ENCODE measurements at regions of chr3 and their contacts with region 1.

Region 1: DNA sequence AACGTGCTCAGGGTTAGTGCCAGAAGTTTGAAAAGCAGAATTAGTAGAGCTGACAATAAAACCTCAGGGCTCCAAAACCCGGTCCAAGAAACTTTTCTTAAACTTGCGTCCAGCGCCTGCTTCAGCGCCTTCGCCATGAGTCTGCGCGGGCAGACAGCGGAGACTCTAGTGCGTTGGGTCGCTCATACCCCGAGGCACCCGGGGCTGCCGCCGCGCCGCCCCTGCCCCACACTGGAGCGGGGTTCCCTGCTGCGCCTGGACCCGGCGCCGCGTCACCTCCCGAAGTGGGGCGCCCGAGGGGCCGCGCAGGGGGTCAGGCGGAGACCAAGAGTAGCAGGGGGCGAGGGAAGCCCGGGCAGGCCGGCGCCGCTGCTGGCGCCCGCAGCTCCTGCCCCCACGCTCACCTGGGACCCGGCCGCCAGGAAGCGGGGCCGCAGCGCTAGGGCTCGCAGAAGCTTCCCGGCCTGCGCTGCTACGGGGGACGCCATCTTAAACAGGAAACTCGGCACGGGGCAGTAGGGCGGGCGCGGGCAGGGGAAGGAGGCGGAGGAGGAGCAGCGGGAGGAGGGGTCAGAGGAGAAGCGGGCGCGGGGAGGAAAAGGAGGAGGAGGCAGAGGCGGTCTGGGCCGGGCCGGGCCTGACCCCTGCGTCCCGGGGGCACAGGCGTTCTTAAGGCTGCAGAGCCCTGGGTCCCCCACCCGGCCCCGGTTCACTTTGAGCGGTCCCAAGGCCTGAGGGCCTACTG is at the start of gene SUCLG2:
- DNase-seq: peak; percentile 92
- H3K4me3 Mint-ChIP-seq: peak within 1 kb of the TSS; percentile 76
- H3K27ac Mint-ChIP-seq: peak within 1 kb of the TSS; percentile 87
- H3K4me1 Mint-ChIP-seq: peaks cover 56% of the 10 kb centered on the region
- H3K27me3 Mint-ChIP-seq: no peaks in the 10 kb centered on the region
- total RNA-seq, gene SUCLG2: 81.3 to 85.3 TPM

Region 2: GRCh38 chr3:66998113-66998903 is 656.0 kb before region 1 on chr3 and contains the start of gene KBTBD8:
- CTCF ChIA-PET with region 1: no interaction called
- intact Hi-C with region 1: loop called (anchors 1 kb)
- DNase-seq: peak; percentile 98
- H3K4me3 Mint-ChIP-seq: peak within 1 kb of the TSS; percentile 87
- H3K27ac Mint-ChIP-seq: peak within 1 kb of the TSS; percentile 95
- H3K4me1 Mint-ChIP-seq: peaks cover 27% of the 10 kb centered on the region
- H3K27me3 Mint-ChIP-seq: peaks cover 4% of the 10 kb centered on the region
- total RNA-seq, gene KBTBD8: 6.8 to 7.4 TPM

Region 3: DNA sequence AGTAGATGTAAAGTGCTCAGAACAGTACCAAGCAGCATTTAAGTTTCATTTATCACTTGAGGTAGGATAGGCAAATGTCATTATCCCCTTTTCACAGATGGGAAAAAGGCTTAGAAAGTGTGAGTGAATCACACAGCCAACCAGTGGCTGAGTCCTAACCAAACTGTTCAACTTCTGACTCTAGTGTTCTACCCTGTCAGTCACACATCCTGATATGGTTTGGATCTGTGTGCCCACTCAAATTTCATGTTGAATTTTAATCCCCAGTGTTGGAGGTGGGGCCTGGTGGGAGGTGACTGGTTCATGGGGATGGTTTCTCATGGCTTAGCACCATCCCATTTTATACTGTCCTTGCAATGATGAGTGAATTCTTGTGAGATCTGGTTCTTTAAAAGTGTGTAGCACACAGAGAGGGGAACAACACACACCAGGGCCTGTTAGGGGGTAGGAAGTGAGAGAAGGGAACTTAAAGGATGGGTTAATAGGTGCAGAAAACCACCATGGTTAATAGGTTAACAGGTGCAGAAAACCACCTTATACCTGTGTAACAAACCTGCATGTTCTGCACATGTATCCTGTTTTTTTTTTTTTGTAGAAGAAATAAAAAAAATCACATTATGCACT is 304.6 kb before region 1 on chr3:
- CTCF ChIA-PET with region 1: no interaction called
- intact Hi-C with region 1: loop called (anchors 5 kb)
- DNase-seq: peak; percentile 70
- H3K4me3 Mint-ChIP-seq: no peak overlapping the region
- H3K27ac Mint-ChIP-seq: no peak overlapping the region
- H3K4me1 Mint-ChIP-seq: peaks cover 17% of the 10 kb centered on the region
- H3K27me3 Mint-ChIP-seq: peaks cover 7% of the 10 kb centered on the region

Region 4: GRCh38 chr3:67635257-67635656 is 19.0 kb before region 1 on chr3:
- CTCF ChIA-PET with region 1: no interaction called
- intact Hi-C with region 1: loop called (anchors 1 kb)
- DNase-seq: peak; percentile 29
- H3K4me3 Mint-ChIP-seq: no peak overlapping the region
- H3K27ac Mint-ChIP-seq: peak overlapping the region; percentile 59
- H3K4me1 Mint-ChIP-seq: peaks cover 67% of the 10 kb centered on the region
- H3K27me3 Mint-ChIP-seq: no peaks in the 10 kb centered on the region

Region 5: DNA sequence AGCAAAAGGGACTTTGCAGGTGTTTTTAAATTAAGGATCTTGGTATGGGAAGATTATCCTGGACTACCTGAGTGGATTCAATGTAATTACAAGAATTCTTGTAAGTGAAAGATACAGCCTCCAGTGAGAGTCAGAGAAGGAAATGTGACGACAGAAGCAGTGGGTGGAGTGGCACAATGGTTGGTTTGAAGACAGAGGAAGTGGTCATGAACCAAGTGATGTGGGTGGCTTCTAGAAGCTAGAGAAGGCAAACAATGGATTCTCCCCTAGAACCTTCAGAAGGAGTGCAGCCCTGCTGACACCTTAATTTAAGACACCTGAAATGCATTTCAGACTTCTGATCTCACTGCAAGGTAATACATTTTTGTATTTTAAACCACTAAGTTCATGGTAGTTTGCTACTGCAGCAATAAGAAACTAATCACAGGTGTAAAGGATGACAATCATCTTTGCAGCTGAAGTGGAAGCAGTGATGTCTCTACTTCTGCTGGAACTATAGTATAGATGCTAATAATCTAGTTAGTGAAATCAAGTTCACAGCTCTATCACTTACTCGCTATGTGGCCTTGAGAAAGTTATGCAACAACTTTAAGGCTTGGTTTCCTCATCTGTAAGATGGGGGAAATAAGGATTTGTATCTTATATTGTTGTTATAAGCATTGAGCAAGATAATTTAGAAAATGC is 403.5 kb after region 1 on chr3:
- CTCF ChIA-PET with region 1: no interaction called
- intact Hi-C with region 1: loop called (anchors 10 kb)
- DNase-seq: peak; percentile 85
- H3K4me3 Mint-ChIP-seq: peak overlapping the region; percentile 53
- H3K27ac Mint-ChIP-seq: peak overlapping the region; percentile 76
- H3K4me1 Mint-ChIP-seq: peaks cover 67% of the 10 kb centered on the region
- H3K27me3 Mint-ChIP-seq: no peaks in the 10 kb centered on the region

Region 6: DNA sequence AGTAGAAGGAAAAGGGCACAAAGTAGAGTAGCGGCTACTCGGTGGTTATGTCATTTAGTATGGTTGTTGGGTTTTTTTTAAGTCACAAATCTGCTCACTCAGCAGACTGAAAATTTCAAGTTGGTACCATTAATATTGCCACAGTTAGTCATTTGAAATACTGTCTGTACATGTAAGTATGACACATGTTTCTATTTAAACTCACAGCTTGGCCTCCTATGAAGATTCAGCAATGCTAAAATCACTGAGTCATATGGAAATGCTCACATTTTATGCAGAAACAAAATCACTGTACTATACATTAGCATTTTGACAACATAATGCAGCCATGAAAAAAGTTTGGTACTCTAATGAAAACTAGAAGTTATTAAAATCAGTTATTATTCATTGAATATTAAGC is 706.2 kb after region 1 on chr3:
- CTCF ChIA-PET with region 1: no interaction called
- intact Hi-C with region 1: no loop called
- DNase-seq: no peak
- H3K4me3 Mint-ChIP-seq: no peak overlapping the region
- H3K27ac Mint-ChIP-seq: no peak overlapping the region
- H3K4me1 Mint-ChIP-seq: no peaks in the 10 kb centered on the region
- H3K27me3 Mint-ChIP-seq: no peaks in the 10 kb centered on the region

Region 7: GRCh38 chr3:69084326-69085167 is 1430.3 kb after region 1 on chr3 and contains the start of gene ARL6IP5:
- CTCF ChIA-PET with region 1: no interaction called
- intact Hi-C with region 1: loop called (anchors 2 kb)
- DNase-seq: peak; percentile 97
- H3K4me3 Mint-ChIP-seq: peak within 1 kb of the TSS; percentile 89
- H3K27ac Mint-ChIP-seq: peak within 1 kb of the TSS; percentile 95
- H3K4me1 Mint-ChIP-seq: peaks cover 57% of the 10 kb centered on the region
- H3K27me3 Mint-ChIP-seq: no peaks in the 10 kb centered on the region
- total RNA-seq, gene ARL6IP5: 66.4 to 71.5 TPM

Measured in activated naive CD4-positive, alpha-beta T cell treated with anti-CD3 and anti-CD28 coated beads for 36 hours (primary cell).